Esophagus muscularis mucosa (tissue), 4 donors: ENCODE measurements at regions of chr11 and their contacts with region 1.

Region 1: DNA sequence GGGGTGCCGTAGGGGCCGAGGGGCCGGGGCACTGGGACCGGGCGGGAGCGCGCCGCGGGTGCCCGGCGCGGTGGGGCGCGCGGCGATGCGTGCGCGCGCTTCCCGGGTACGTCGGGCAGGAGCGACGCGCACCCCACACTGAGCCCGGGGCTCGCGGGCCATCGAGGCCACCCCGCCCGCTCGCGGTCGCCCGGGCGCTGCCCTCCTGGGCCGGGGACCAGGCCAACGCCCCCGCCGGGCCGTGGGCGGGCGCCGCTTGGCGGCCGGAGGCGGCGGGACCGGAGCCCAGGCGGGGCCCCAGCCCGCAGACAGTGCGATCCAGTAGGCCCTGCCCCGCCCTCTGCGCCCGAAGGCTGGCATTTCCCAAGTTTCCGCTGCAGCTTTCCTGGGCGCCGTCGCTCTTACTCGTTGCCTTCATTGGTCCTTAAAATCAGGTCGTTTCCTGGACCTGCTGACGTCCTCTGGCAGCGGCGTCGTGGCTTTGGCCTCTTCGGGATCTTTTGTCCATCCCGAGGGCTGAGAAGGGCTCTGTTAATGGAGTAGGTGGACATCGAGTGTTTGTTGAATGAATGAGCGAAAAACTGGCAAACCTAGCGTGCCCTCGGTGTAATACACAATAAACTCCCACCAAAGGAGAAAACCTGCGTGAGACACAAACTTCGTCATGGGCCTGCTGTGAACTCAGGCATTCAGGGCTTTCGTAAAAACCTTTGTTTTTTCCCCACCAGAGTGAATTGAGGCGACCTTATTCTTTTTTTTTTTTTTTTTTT is 638 bp downstream of the PARVA start:
- DNase-seq: peak; percentile 92
- H3K4me3 ChIP-seq: peak overlapping the region; percentile 73 to 82 (median 78)
- H3K27ac ChIP-seq: peak overlapping the region; percentile 96 to 100 (median 98)
- H3K4me1 ChIP-seq: peaks cover 36 to 71% (median 67%) of the 10 kb centered on the region in 4 donors
- H3K27me3 ChIP-seq: no peaks in the 10 kb centered on the region
- CTCF ChIP-seq: peak in 2 of 3 experiments; percentile 43 to 53
- EP300 ChIP-seq: peak; percentile 50
- POLR2A ChIP-seq: no peak

Region 2: DNA sequence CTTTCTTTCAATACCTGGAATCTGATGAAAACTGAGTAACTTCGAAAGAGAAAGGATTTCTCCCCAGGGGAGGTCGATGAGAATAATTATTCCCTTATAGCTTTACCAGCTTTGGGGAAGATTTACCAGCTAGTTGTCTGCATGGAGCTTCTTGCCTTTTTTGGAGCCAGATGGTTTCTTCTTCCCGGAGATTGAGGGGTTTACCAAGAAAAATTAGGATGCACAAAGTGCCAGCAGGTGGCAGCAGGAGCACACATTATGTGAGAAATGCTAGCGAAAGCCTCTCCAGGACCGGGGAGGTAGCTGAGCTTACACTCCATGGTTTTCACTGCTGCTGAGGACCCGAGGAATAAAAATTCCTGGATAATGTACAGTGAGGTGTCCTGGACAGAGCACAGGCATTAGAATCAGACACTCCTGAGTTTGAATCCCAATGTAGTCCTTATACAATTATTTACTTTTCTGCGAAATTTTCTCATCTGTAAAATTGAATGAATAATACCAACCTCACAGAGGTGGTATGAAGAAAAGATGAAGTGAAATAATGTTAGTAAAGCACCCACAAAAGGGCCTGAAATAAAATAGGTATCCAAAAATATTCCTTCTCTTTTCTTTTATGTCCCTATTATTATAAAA is 46.7 kb before region 1 on chr11:
- intact Hi-C with region 1: loop called (anchors 2 kb)
- DNase-seq: no peak
- H3K4me3 ChIP-seq: no peak overlapping the region
- H3K27ac ChIP-seq: peak overlapping the region; percentile 44 to 62 (median 54)
- H3K4me1 ChIP-seq: peaks cover 0 to 42% (median 39%) of the 10 kb centered on the region in 4 donors
- H3K27me3 ChIP-seq: no peaks in the 10 kb centered on the region
- CTCF ChIP-seq: peak; percentile 76 to 87 (median 83)
- EP300 ChIP-seq: no peak
- POLR2A ChIP-seq: no peak

Region 3: GRCh38 chr11:13229711-13230318 is 851.8 kb after region 1 on chr11:
- intact Hi-C with region 1: no loop called
- DNase-seq: no peak
- H3K4me3 ChIP-seq: no peak overlapping the region
- H3K27ac ChIP-seq: no peak overlapping the region
- H3K4me1 ChIP-seq: peaks cover 0 to 29% (median 13%) of the 10 kb centered on the region in 4 donors
- H3K27me3 ChIP-seq: no peaks in the 10 kb centered on the region
- CTCF ChIP-seq: no peak
- EP300 ChIP-seq: no peak
- POLR2A ChIP-seq: no peak